ENCODE measurements at regions of chr5 and their contacts with region 1.

Region 1: DNA sequence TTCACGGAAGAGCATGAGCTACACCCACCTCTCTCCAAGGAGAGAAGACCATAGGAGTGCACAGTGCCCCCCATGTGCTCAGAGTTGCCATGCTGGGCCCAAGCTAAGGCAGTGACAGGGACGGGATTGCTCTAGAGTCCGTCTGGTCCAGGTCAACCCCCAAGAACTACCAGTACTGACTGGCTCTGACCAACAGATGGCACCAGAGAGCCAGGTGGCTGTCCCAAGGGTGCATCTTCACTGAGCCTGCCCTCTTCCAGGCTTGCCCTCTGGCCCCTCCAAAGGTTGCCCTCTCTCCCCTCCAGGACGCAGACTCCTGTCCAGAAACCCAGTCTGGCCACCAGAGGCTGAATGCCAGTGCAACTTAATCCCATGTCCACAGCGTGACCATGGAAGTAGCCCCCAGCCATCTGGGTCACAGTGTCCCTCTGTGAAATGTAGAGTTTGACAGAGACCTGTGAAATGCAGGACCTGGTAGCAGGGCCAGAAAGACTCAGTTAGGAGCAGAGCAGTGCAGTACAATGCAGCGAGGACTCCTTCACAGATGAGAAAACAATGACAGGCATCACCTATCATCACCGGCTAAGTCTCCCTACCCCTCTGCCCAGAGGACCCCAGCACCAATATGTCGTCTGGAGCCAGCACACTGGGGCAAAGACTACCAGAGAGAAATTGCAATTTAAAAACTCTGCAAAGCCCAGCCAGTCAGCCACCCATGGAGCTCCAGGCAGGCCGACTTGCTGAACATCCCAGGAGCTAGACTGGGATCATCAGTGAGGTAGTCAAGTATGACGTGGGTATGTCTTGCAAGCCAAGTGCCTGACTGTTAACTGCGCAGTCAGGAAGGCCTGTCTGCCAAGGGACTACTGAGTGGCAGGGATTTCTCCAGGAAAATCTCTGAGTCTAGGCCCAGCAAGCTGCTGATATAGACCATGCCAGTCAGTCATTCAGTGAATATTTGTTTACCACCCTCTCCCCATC is 7.7 kb upstream of the SKP1 start:
- DNase-seq: peak; percentile 68
- H3K4me3 ChIP-seq: no peak overlapping the region
- H3K27ac ChIP-seq: no peak overlapping the region
- H3K4me1 ChIP-seq: no peaks in the 10 kb centered on the region
- H3K27me3 ChIP-seq: no peaks in the 10 kb centered on the region

Region 2: GRCh38 chr5:134289509-134290113 is 105.2 kb after region 1 on chr5:
- in situ Hi-C with region 1: loop called (anchors 5 kb)
- DNase-seq: peak; percentile 85
- H3K4me3 ChIP-seq: no peak overlapping the region
- H3K27ac ChIP-seq: no peak overlapping the region
- H3K4me1 ChIP-seq: no peaks in the 10 kb centered on the region
- H3K27me3 ChIP-seq: no peaks in the 10 kb centered on the region